Lower leg skin (tissue), 4 donors: ENCODE measurements at regions of chr17 and their contacts with region 1.

Region 1: GRCh38 chr17:64964796-64965195 is 45.5 kb upstream of the LRRC37A3 start:
- DNase-seq: no peak
- H3K4me3 ChIP-seq: no peak overlapping the region
- CTCF ChIP-seq: no peak
- POLR2A ChIP-seq: no peak

Region 2: GRCh38 chr17:64778240-64779097 is 186.3 kb before region 1 on chr17:
- intact Hi-C with region 1: loop called (anchors 5 kb)
- DNase-seq: peak in 1 of 2 donors; percentile 89
- H3K4me3 ChIP-seq: no peak overlapping the region
- CTCF ChIP-seq: no peak
- POLR2A ChIP-seq: no peak

Region 3: GRCh38 chr17:65013613-65014391 is 49.0 kb after region 1 on chr17:
- intact Hi-C with region 1: no loop called
- DNase-seq: no peak
- H3K4me3 ChIP-seq: no peak overlapping the region
- CTCF ChIP-seq: no peak
- POLR2A ChIP-seq: no peak